Prostate gland (tissue), 2 donors: ENCODE measurements at regions of chr1 and their contacts with region 1.

Region 1: GRCh38 chr1:1399187-1399871 is at the start of gene CCNL2:
- DNase-seq: peak; percentile 97
- H3K4me3 ChIP-seq: peak within 1 kb of the TSS; percentile 92 to 96
- H3K27ac ChIP-seq: peak within 1 kb of the TSS; percentile 73 to 79
- H3K4me1 ChIP-seq: peaks cover 15% of the 10 kb centered on the region
- H3K27me3 ChIP-seq: no peaks in the 10 kb centered on the region
- CTCF ChIP-seq: peak; percentile 59 to 94 (median 76)
- POLR2A ChIP-seq: peak; percentile 34
- total RNA-seq, gene CCNL2: 116 to 242 TPM

Region 2: DNA sequence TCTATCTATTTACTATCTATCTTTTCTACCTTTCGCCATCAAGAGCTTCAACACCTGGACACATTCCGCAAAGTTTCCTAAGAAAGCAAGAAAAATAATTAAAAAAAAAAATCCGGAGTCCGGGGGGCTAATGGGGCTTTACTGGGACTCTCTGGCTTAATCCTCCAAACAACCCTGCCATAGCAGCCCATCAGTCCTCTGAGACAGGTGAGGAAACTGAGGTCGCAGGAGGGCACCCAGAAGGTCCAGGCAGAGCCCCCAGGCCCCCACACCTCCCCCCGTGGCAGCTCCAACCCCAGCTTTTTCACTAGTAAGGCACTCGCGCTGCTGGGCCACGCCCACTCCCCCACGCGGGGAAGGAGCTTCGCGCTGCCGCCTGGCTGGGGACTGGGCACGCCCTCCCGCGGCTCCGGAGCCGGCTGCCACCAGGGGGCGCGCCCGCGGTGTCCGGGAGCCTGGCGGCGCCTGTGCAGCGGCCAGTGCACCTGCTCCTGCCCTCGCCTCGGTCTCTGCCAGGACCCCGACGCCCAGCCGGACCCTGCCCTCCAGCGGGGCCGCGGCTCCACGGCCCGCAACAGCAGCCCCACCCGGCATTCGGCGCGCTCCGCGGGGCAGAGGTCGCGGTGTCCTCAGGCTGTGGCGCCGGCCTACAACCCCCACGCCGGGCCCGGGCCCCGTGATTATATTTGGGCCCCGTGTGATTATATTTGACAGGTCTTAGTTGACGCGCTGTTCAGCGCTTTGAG is 529.7 kb before region 1 on chr1:
- intact Hi-C with region 1: no loop called
- DNase-seq: peak; percentile 21
- H3K4me3 ChIP-seq: peak overlapping the region in 1 of 2 donors; percentile 13
- H3K27ac ChIP-seq: no peak overlapping the region
- H3K4me1 ChIP-seq: no peaks in the 10 kb centered on the region
- H3K27me3 ChIP-seq: no peaks in the 10 kb centered on the region
- CTCF ChIP-seq: peak; percentile 54 to 79 (median 68)
- POLR2A ChIP-seq: no peak

Region 3: GRCh38 chr1:1021010-1021919 is 378.1 kb before region 1 on chr1:
- intact Hi-C with region 1: no loop called
- DNase-seq: no peak
- H3K4me3 ChIP-seq: peak overlapping the region; percentile 77 to 78
- H3K27ac ChIP-seq: peak overlapping the region in 1 of 2 donors; percentile 97
- H3K4me1 ChIP-seq: peaks cover 17% of the 10 kb centered on the region
- H3K27me3 ChIP-seq: no peaks in the 10 kb centered on the region
- CTCF ChIP-seq: no peak
- POLR2A ChIP-seq: peak; percentile 38

Region 4: DNA sequence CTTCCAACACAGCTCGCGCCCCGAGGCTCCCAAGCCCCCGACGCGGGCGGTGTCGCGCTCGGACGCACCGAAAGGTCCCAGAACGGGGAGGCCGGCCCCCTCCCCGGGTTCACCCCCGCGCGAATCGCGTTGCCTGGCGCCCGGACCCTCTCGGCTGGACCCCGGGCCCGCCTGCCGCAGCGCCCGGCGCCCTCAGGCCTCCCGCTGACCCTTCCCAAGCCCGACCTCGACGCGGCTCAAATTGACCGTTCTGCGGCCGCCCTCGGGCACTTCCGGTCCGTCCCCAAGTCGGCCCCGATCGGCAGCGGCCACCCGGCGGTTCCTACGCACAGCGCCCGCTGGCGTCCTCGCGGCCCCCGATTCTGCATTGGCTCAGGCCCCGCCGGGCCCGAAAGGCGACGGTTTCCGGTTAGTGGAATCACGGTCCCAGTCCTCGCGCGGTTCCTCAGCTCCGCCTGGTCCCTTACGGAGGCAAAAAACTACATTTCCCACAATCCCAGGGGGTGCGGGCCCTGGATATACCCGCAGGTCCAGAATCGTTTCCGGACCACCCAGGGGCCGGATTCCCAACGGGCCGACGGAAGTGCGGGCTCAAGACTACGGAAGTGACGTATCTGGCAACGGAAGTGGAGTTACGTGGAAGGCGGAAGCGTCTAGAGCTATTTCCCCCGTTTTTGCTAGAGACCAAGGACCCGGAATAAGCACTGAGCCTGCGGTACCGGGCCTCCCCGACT is 24.2 kb before region 1 on chr1 and contains the start of gene AURKAIP1:
- intact Hi-C with region 1: loop called (anchors 1 kb)
- DNase-seq: peak; percentile 99
- H3K4me3 ChIP-seq: peak within 1 kb of the TSS; percentile 96 to 98
- H3K27ac ChIP-seq: peak within 1 kb of the TSS; percentile 88 to 91
- H3K4me1 ChIP-seq: peaks cover 17% of the 10 kb centered on the region
- H3K27me3 ChIP-seq: no peaks in the 10 kb centered on the region
- CTCF ChIP-seq: peak in 3 of 4 experiments; percentile 23 to 62 (median 56)
- POLR2A ChIP-seq: peak; percentile 45
- total RNA-seq, gene AURKAIP1: 152 to 161 TPM

Region 5: GRCh38 chr1:1550591-1551432 is 151.5 kb after region 1 on chr1:
- intact Hi-C with region 1: no loop called
- DNase-seq: no peak
- H3K4me3 ChIP-seq: no peak overlapping the region
- H3K27ac ChIP-seq: no peak overlapping the region
- H3K4me1 ChIP-seq: no peaks in the 10 kb centered on the region
- H3K27me3 ChIP-seq: no peaks in the 10 kb centered on the region
- CTCF ChIP-seq: no peak
- POLR2A ChIP-seq: no peak